ENCODE measurements at regions of chr1 and their contacts with region 1.

Region 1: DNA sequence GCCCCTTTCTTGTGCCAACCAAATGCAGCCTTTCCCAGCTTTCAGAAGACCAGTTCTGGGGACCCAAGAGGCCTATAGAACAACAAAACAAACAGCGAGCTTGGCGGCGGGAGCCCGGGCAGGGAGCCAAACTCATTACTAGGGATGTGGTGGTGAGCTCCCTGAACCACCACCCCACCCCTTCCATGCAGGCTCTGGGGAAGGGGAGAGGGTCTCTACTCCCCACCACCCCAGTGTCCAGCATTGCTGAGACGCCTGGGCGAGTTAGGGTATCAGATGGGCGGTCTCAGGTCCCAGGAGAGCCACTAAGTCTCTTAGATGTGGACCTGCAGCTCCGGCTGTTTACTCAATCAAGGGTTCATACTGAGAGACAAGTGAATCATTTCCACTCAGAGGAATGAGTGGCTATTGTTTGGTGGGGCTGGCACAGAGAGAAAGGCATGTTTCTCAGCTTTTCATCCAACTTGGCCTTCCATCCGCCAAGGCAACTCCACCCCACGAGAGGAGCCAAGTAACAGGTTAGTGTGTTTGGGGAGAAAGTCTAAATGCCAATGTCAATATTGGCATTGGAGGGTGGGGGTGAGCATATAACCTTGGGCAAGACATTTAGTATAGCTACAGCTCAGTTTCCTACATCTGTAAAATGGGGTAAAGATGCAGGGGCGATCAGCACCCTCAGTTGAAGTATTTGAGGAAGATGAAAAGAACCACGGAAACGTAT is 40.9 kb downstream of the PLXNA2 start:
- DNase-seq: peak; percentile 46
- ATAC-seq: no peak
- H3K4me3 ChIP-seq: no peak overlapping the region
- H3K27ac ChIP-seq: no peak overlapping the region
- H3K4me1 ChIP-seq: peaks cover 23% of the 10 kb centered on the region
- H3K27me3 ChIP-seq: no peaks in the 10 kb centered on the region
- CTCF ChIP-seq: no peak
- POLR2A ChIP-seq: no peak
- RAD21 ChIP-seq: no peak

Region 2: DNA sequence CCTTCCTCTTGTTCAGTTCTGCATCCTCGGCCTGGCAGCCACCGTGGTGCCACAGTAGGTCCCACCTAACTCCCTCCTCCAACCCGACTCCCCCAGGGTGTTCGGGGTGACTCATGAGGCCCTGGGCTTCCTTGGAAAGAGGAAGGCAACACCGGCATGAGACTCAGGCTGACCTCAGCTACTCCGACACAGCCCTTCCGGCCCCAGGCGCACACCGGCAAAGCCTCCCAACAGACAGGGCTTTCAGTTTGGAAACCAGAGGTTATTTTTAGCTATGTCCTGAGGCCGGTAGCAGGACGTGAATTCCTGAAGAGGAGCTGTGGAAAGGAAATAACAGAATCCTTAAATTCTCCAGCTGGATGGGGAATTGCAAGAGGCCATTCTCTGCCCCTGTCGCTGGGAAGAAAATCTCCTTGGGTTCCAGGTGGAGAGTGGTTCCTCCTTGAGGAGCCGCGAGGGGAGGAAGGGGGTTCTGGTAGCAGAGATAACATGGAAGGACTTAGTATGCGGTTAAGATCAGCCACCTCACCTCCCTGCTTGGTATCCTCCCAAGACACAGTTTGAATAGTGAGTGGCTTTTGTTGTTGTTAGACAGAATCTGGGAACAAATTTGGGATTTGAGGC is 16.5 kb after region 1 on chr1:
- CTCF ChIA-PET with region 1: interaction called, 6 read pairs
- POLR2A ChIA-PET with region 1: no interaction called
- dilution Hi-C with region 1: no loop called
- in situ Hi-C with region 1: no loop called
- intact Hi-C with region 1: loop called (anchors 2 kb)
- DNase-seq: peak; percentile 61
- ATAC-seq: peak; percentile 48
- H3K4me3 ChIP-seq: no peak overlapping the region
- H3K27ac ChIP-seq: peak overlapping the region; percentile 45
- H3K4me1 ChIP-seq: peaks cover 30% of the 10 kb centered on the region
- H3K27me3 ChIP-seq: no peaks in the 10 kb centered on the region
- CTCF ChIP-seq: no peak
- POLR2A ChIP-seq: no peak
- RAD21 ChIP-seq: no peak

Measured in IMR-90 (cell line).